ENCODE measurements at regions of chr16 and their contacts with region 1.

Region 1: DNA sequence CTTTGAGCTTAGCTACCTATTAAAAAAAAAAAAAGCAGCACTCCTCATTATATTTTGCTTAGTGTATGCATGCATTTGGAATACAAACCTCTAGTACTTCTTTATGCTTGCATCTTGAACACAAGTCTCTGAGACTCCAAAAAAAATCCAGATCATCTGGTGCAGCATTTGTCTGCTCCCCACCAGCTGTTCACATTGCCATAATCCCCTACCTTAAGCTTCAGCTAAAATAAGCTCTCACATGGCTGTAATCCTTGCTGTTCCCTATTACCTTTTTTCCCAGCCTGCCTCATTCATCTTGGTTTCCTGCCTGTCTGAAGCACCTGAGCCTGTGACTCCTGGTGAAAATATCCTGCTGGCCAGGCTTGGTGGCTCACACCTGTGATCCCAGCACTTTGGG is 7.5 kb upstream of the NFATC2IP start:
- DNase-seq: no peak
- H3K4me3 ChIP-seq: no peak overlapping the region
- H3K27ac ChIP-seq: no peak overlapping the region
- H3K4me1 ChIP-seq: peaks cover 22% of the 10 kb centered on the region
- CTCF ChIP-seq: no peak

Region 2: DNA sequence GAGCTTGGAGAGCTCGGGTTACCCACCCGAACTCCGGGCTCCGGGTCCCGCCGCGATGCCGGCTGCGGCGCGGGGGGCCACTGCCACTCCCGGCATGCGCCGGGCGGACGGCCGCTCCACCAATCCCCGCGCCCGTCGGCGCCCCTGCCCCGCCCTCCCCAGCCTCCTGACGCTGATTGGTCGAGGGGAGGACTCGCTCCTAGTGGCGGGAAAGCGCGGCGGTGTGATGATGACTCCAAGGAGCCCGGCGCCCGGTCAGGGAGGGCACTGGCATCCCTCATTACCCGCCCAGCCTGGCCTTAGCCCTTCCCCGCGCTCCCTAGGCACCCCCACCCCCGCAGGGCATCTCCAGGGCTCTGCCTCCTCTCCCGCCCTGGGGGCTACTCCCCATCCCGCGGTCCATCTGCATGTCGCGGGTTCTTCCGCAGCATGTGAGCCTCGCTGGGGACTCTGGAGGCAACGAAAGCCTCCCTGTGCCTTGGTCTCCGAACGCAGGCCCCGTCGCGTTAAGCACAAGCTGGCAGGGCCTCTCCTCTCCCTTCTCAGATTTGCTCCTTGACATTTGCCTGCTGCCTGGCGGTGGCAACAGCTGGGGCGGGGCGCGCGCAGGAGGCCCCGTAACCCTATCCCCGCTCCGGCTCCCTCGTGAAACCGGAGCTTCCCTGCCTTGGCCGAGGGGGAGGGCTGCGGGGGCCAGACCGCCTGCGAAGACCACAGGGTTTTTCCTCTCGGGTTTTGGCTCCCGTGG is 63.3 kb before region 1 on chr16:
- CTCF ChIA-PET with region 1: no interaction called
- POLR2A ChIA-PET with region 1: interaction called, 4 read pairs
- intact Hi-C with region 1: loop called (anchors 1 kb)
- DNase-seq: peak; percentile 93
- H3K4me3 ChIP-seq: peak overlapping the region; percentile 77
- H3K27ac ChIP-seq: peak overlapping the region; percentile 64
- H3K4me1 ChIP-seq: peaks cover 24% of the 10 kb centered on the region
- CTCF ChIP-seq: no peak

Region 3: GRCh38 chr16:28910086-28911031 is 32.9 kb before region 1 on chr16:
- CTCF ChIA-PET with region 1: interaction called, 3 read pairs
- POLR2A ChIA-PET with region 1: interaction called, 6 read pairs
- intact Hi-C with region 1: loop called (anchors 1 kb)
- DNase-seq: peak; percentile 71
- H3K4me3 ChIP-seq: peak overlapping the region; percentile 4
- H3K27ac ChIP-seq: peak overlapping the region; percentile 79
- H3K4me1 ChIP-seq: peaks cover 28% of the 10 kb centered on the region
- CTCF ChIP-seq: no peak

Region 4: DNA sequence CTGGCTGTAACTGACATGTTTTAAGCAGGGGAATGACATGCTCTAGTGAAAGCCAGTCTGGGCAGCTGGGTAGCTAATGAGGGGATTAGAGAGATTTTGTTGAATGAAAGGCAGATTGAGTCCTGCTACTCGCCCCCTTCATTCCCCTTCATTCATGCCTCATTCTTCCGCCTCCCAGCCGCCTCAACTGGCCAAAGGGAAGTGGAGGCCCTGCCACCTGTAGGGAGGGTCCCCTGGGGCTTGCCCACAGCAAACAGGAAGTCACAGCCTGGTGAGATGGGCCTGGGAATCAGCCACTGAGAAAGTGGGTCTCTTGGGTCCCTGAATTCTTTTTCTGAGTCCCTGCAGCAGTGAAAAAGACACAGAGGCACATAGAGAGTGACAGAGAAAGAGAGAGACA is 12.6 kb before region 1 on chr16:
- CTCF ChIA-PET with region 1: interaction called, 3 read pairs
- POLR2A ChIA-PET with region 1: interaction called, 17 read pairs
- intact Hi-C with region 1: loop called (anchors 2 kb)
- DNase-seq: peak; percentile 97
- H3K4me3 ChIP-seq: peak overlapping the region; percentile 78
- H3K27ac ChIP-seq: peak overlapping the region; percentile 99
- H3K4me1 ChIP-seq: peaks cover 80% of the 10 kb centered on the region
- CTCF ChIP-seq: no peak